ENCODE measurements at regions of chr12 and their contacts with region 1.

Region 1: DNA sequence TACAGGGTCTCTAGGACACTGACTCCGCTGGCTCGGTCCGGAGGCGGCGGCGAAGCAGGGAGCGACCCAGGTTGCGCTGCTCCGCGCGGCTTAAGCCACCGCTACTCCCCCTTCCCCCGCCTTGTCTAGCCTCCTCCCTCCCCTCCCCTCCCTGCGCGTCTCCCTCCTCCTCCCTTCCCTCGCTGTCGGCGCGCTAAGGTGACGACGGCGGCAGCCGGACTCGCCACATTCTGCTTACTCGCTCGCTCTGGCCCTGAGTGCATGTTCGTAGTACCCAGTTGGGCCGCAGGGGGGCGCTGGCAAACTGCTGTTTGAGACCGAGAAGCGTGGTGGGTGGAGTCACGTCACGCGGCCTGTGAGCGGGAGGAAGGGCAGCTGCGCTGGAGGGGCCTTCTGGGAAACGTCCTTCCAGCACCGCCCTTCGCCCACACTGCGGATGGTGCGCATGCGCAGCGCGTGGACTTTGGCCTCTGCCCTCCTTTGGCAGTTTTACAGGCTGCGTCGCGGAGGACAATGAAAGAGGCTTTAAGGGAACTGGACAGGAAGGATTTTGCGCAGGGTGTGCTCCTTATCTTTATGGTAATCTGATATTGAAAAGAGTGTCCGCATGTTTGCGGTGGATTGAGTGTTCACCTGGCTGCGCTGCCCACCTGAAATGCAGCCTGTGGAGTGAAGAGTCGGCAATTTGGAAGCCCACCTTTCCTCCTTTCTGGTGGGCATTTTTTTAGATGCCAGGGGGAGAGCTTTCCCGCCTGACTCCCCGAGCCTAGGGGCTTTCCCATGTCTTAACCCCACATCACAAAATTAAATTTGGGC is at the start of gene SCAF11:
- DNase-seq: peak; percentile 100
- H3K4me3 Mint-ChIP-seq: peak within 1 kb of the TSS; percentile 94
- H3K27ac Mint-ChIP-seq: peak within 1 kb of the TSS; percentile 99
- H3K4me1 Mint-ChIP-seq: peaks cover 36% of the 10 kb centered on the region
- H3K27me3 Mint-ChIP-seq: no peaks in the 10 kb centered on the region
- total RNA-seq, gene SCAF11: 95.0 to 97.7 TPM

Region 2: GRCh38 chr12:45234139-45234846 is 756.4 kb before region 1 on chr12:
- CTCF ChIA-PET with region 1: no interaction called
- intact Hi-C with region 1: loop called (anchors 2 kb)
- DNase-seq: no peak
- H3K4me3 Mint-ChIP-seq: peak overlapping the region; percentile 35
- H3K27ac Mint-ChIP-seq: peak overlapping the region; percentile 83
- H3K4me1 Mint-ChIP-seq: peaks cover 65% of the 10 kb centered on the region
- H3K27me3 Mint-ChIP-seq: no peaks in the 10 kb centered on the region

Region 3: GRCh38 chr12:45500157-45500556 is 490.5 kb before region 1 on chr12:
- CTCF ChIA-PET with region 1: no interaction called
- intact Hi-C with region 1: no loop called
- DNase-seq: no peak
- H3K4me3 Mint-ChIP-seq: no peak overlapping the region
- H3K27ac Mint-ChIP-seq: no peak overlapping the region
- H3K4me1 Mint-ChIP-seq: no peaks in the 10 kb centered on the region
- H3K27me3 Mint-ChIP-seq: peaks cover 4% of the 10 kb centered on the region

Region 4: GRCh38 chr12:45762185-45763110 is 228.2 kb before region 1 on chr12:
- CTCF ChIA-PET with region 1: no interaction called
- intact Hi-C with region 1: loop called (anchors 1 kb)
- DNase-seq: no peak
- H3K4me3 Mint-ChIP-seq: no peak overlapping the region
- H3K27ac Mint-ChIP-seq: no peak overlapping the region
- H3K4me1 Mint-ChIP-seq: peaks cover 47% of the 10 kb centered on the region
- H3K27me3 Mint-ChIP-seq: no peaks in the 10 kb centered on the region

Region 5: GRCh38 chr12:45878630-45879255 is 111.9 kb before region 1 on chr12:
- CTCF ChIA-PET with region 1: no interaction called
- intact Hi-C with region 1: no loop called
- DNase-seq: no peak
- H3K4me3 Mint-ChIP-seq: no peak overlapping the region
- H3K27ac Mint-ChIP-seq: no peak overlapping the region
- H3K4me1 Mint-ChIP-seq: peaks cover 28% of the 10 kb centered on the region
- H3K27me3 Mint-ChIP-seq: no peaks in the 10 kb centered on the region

Region 6: GRCh38 chr12:46087916-46088439 is 97.3 kb after region 1 on chr12:
- CTCF ChIA-PET with region 1: no interaction called
- intact Hi-C with region 1: no loop called
- DNase-seq: no peak
- H3K4me3 Mint-ChIP-seq: no peak overlapping the region
- H3K27ac Mint-ChIP-seq: no peak overlapping the region
- H3K4me1 Mint-ChIP-seq: no peaks in the 10 kb centered on the region
- H3K27me3 Mint-ChIP-seq: peaks cover 6% of the 10 kb centered on the region

Region 7: GRCh38 chr12:46153268-46153872 is 162.7 kb after region 1 on chr12:
- CTCF ChIA-PET with region 1: no interaction called
- intact Hi-C with region 1: loop called (anchors 2 kb)
- DNase-seq: no peak
- H3K4me3 Mint-ChIP-seq: no peak overlapping the region
- H3K27ac Mint-ChIP-seq: no peak overlapping the region
- H3K4me1 Mint-ChIP-seq: peaks cover 12% of the 10 kb centered on the region
- H3K27me3 Mint-ChIP-seq: peaks cover under 1% of the 10 kb centered on the region

Region 8: GRCh38 chr12:46372544-46373110 is 382.0 kb after region 1 on chr12 and contains the start of gene SLC38A2:
- CTCF ChIA-PET with region 1: interaction called, 4 read pairs
- intact Hi-C with region 1: loop called (anchors 1 kb)
- DNase-seq: peak; percentile 97
- H3K4me3 Mint-ChIP-seq: peak within 1 kb of the TSS; percentile 96
- H3K27ac Mint-ChIP-seq: peak within 1 kb of the TSS; percentile 98
- H3K4me1 Mint-ChIP-seq: peaks cover 51% of the 10 kb centered on the region
- H3K27me3 Mint-ChIP-seq: no peaks in the 10 kb centered on the region
- total RNA-seq, gene SLC38A2: 196 to 206 TPM

Region 9: GRCh38 chr12:46675736-46676135 is 685.1 kb after region 1 on chr12:
- CTCF ChIA-PET with region 1: no interaction called
- intact Hi-C with region 1: loop called (anchors 5 kb)
- DNase-seq: no peak
- H3K4me3 Mint-ChIP-seq: no peak overlapping the region
- H3K27ac Mint-ChIP-seq: no peak overlapping the region
- H3K4me1 Mint-ChIP-seq: peaks cover 7% of the 10 kb centered on the region
- H3K27me3 Mint-ChIP-seq: no peaks in the 10 kb centered on the region